Calu3 (cell line): ENCODE measurements at regions of chr7 and their contacts with region 1.

Region 1: DNA sequence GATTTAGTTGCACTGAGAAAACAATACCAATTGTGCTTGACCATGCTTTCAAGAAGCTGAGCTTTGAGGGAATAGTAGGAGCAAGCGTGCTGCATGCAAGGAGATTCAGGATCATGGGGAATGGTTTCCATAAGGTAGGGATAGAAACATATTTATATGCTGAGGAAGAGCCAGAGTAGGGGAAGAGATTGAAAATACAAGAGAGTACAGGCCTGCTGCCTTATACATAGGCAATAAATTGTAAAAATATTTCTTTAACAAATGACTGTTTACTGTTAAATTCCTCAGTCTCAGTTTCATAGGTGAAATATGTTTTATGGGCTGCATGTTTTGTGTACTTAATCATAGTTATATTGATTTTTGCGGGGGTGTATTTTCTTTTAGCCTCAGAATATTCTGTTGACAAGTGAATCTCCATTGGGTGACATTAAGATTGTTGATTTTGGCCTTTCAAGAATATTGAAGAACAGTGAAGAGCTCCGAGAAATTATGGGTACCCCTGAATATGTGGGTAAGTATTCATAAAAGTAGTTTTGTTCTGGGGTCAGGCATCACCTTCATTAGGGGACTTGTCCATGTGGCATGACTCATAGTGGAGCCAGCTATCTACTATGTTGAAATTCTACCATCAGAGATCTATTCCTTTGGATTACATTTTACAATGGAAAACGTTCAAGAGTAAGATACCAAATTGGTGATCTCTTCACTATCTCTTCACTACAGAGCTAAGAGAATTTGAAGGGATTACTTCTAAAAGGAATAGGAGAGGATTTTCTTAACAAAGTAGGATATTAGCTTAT is 36.5 kb downstream of the STK17A start:
- DNase-seq: no peak
- H3K4me3 Mint-ChIP-seq: no peak overlapping the region
- H3K27ac Mint-ChIP-seq: no peak overlapping the region
- H3K4me1 Mint-ChIP-seq: peaks cover 7% of the 10 kb centered on the region
- H3K27me3 Mint-ChIP-seq: no peaks in the 10 kb centered on the region
- CTCF ChIP-seq: no peak

Region 2: GRCh38 chr7:42070043-42070675 is 1549.3 kb before region 1 on chr7:
- CTCF ChIA-PET with region 1: no interaction called
- intact Hi-C with region 1: no loop called
- DNase-seq: no peak
- H3K4me3 Mint-ChIP-seq: no peak overlapping the region
- H3K27ac Mint-ChIP-seq: no peak overlapping the region
- H3K4me1 Mint-ChIP-seq: no peaks in the 10 kb centered on the region
- H3K27me3 Mint-ChIP-seq: no peaks in the 10 kb centered on the region
- CTCF ChIP-seq: no peak

Region 3: DNA sequence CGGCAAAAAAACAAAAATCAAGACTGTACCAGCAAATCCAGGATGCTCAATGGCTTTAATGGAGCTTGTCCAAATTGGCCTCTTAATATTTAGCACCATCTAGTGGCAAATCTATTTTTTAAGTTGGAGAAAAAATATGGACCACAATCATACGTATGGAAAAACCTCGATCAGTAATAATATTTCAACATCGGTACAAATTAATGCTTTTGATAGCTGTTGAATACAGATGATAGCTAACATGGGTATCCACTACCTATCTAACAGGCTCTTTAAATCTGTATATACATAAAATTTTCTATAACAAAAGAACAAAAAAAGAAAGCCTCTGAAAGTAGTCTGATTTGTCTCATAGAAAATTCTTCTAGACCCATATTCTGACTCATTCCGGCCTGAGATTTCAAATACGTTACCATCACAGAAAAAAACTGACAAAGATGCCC is 80.7 kb after region 1 on chr7:
- CTCF ChIA-PET with region 1: interaction called, 11 read pairs
- intact Hi-C with region 1: no loop called
- DNase-seq: no peak
- H3K4me3 Mint-ChIP-seq: no peak overlapping the region
- H3K27ac Mint-ChIP-seq: no peak overlapping the region
- H3K4me1 Mint-ChIP-seq: no peaks in the 10 kb centered on the region
- H3K27me3 Mint-ChIP-seq: no peaks in the 10 kb centered on the region
- CTCF ChIP-seq: peak; percentile 75